CD4-positive, alpha-beta T cell (primary cell): ENCODE measurements at regions of chr19 and their contacts with region 1.

Region 1: GRCh38 chr19:34308381-34309367 is 54.3 kb downstream of the GARRE1 start:
- DNase-seq: peak in 6 of 14 experiments; percentile 19 to 90 (median 60)
- ATAC-seq: peak; percentile 81
- H3K4me3 ChIP-seq: no peak overlapping the region
- H3K4me3 Mint-ChIP-seq: peak overlapping the region; percentile 75
- H3K27ac ChIP-seq: peak overlapping the region; percentile 52 to 59
- H3K27ac Mint-ChIP-seq: peak overlapping the region; percentile 99
- H3K4me1 ChIP-seq: peaks cover 59% of the 10 kb centered on the region
- H3K4me1 Mint-ChIP-seq: peaks cover 75% of the 10 kb centered on the region
- H3K27me3 ChIP-seq: no peaks in the 10 kb centered on the region
- H3K27me3 Mint-ChIP-seq: no peaks in the 10 kb centered on the region
- CTCF ChIP-seq: no peak

Region 2: GRCh38 chr19:34291235-34291634 is 17.4 kb before region 1 on chr19:
- CTCF ChIA-PET with region 1: interaction called, 3 read pairs
- POLR2A ChIA-PET with region 1: interaction called, 4 read pairs
- intact Hi-C with region 1: loop called in 1 of 2 experiments (anchors 2 kb)
- DNase-seq: no peak
- ATAC-seq: no peak
- H3K4me3 ChIP-seq: no peak overlapping the region
- H3K4me3 Mint-ChIP-seq: no peak overlapping the region
- H3K27ac ChIP-seq: no peak overlapping the region
- H3K27ac Mint-ChIP-seq: no peak overlapping the region
- H3K4me1 ChIP-seq: peaks cover 12% of the 10 kb centered on the region
- H3K4me1 Mint-ChIP-seq: peaks cover 31% of the 10 kb centered on the region
- H3K27me3 ChIP-seq: no peaks in the 10 kb centered on the region
- H3K27me3 Mint-ChIP-seq: no peaks in the 10 kb centered on the region
- CTCF ChIP-seq: no peak

Region 3: DNA sequence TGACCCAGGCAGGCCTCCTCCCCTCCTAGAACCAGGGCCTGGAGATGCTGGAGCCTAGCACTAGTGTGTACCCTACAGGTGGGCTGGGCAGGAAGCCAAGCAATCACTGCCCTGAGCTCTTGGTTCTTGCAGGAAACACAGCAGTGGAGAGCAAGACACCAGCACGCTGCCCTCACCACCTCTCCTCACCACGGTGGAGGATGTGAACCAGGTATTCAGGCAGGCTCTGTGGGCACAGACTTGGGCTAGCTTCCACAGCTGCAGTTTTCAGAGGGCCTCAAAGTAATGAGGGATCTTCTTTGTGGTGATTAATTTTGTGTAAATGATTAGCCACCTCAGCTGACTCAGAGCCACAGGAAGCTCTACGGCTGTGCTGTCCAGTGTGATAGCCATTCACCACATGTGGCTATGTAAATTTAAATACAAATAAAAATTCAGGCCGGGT is 42.7 kb after region 1 on chr19:
- CTCF ChIA-PET with region 1: interaction called, 3 read pairs
- POLR2A ChIA-PET with region 1: no interaction called
- intact Hi-C with region 1: loop called in 1 of 2 experiments (anchors 5 kb)
- DNase-seq: peak in 7 of 14 experiments; percentile 10 to 43 (median 33)
- ATAC-seq: no peak
- H3K4me3 ChIP-seq: no peak overlapping the region
- H3K4me3 Mint-ChIP-seq: no peak overlapping the region
- H3K27ac ChIP-seq: peak overlapping the region in 1 of 2 donors; percentile 29
- H3K27ac Mint-ChIP-seq: peak overlapping the region; percentile 62
- H3K4me1 ChIP-seq: peaks cover 33% of the 10 kb centered on the region
- H3K4me1 Mint-ChIP-seq: peaks cover 20% of the 10 kb centered on the region
- H3K27me3 ChIP-seq: no peaks in the 10 kb centered on the region
- H3K27me3 Mint-ChIP-seq: no peaks in the 10 kb centered on the region
- CTCF ChIP-seq: no peak

Region 4: DNA sequence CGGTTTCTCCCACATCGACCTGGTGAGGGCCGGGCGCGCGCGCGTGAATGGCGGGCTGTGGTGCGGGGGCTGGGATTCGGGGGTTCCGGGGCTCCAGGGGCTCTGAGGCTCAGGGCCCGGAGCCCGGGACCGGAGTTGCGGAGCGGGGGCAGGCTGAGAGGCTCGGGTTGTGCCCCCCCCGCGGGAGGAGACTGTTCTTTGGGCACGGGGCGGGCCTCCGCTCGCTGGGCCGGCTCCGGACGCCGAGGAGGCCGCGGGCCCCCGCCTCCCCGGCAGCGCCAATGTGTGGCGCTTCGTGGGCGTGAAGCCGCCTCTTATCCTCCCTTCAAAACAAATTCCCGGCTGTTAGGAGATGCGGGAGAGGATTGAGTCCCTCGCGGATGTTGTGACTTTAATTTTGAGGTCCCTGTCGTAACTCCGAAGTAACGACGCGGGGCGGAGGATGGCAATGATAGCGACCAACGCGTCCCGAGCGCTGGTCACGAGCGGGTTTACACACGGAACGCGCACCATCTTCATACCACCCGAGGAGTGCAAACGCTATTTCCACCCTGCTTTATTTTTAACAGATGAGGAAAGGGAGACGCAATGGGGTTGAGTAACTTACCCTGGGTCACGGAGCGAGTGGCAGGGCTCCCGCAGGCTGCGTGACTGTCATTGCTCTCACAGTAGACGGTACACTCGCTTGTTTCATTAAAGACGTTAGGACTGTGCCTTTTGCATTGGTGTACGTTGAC is 120.0 kb after region 1 on chr19:
- CTCF ChIA-PET with region 1: no interaction called
- POLR2A ChIA-PET with region 1: no interaction called
- intact Hi-C with region 1: no loop called
- DNase-seq: peak in 8 of 14 experiments; percentile 1 to 64 (median 22)
- ATAC-seq: peak; percentile 37
- H3K4me3 ChIP-seq: peak overlapping the region; percentile 88
- H3K4me3 Mint-ChIP-seq: peak overlapping the region; percentile 99
- H3K27ac ChIP-seq: peak overlapping the region; percentile 66 to 91
- H3K27ac Mint-ChIP-seq: peak overlapping the region; percentile 95
- H3K4me1 ChIP-seq: peaks cover 27% of the 10 kb centered on the region
- H3K4me1 Mint-ChIP-seq: peaks cover 41% of the 10 kb centered on the region
- H3K27me3 ChIP-seq: no peaks in the 10 kb centered on the region
- H3K27me3 Mint-ChIP-seq: no peaks in the 10 kb centered on the region
- CTCF ChIP-seq: no peak

Region 5: DNA sequence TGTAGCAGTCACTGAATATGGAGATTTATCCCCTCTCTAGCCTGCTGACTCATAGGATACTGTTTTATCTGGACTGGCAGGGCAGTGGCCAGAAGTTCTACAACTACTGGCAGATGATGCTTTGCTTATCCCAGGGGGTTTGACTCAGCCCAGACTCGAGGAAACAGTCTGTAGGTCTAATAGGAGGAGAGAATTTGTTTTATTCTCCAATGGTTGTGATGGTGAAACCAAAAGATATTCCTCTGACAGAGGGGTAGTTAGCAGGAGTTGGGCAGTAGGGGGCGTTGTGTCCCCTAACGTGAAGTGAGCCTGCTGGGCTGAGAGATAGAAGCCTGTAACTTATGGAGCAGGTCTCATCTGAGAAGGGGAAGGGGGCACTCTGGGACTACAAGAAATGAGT is 247.8 kb after region 1 on chr19:
- CTCF ChIA-PET with region 1: no interaction called
- POLR2A ChIA-PET with region 1: no interaction called
- intact Hi-C with region 1: no loop called
- DNase-seq: no peak
- ATAC-seq: no peak
- H3K4me3 ChIP-seq: no peak overlapping the region
- H3K4me3 Mint-ChIP-seq: no peak overlapping the region
- H3K27ac ChIP-seq: no peak overlapping the region
- H3K27ac Mint-ChIP-seq: no peak overlapping the region
- H3K4me1 ChIP-seq: no peaks in the 10 kb centered on the region
- H3K4me1 Mint-ChIP-seq: no peaks in the 10 kb centered on the region
- H3K27me3 ChIP-seq: peaks cover 22 to 27% of the 10 kb centered on the region in 2 experiments
- H3K27me3 Mint-ChIP-seq: peaks cover 69% of the 10 kb centered on the region
- CTCF ChIP-seq: no peak